Caco-2 (cell line): ENCODE measurements at regions of chr5 and their contacts with region 1.

Region 1: DNA sequence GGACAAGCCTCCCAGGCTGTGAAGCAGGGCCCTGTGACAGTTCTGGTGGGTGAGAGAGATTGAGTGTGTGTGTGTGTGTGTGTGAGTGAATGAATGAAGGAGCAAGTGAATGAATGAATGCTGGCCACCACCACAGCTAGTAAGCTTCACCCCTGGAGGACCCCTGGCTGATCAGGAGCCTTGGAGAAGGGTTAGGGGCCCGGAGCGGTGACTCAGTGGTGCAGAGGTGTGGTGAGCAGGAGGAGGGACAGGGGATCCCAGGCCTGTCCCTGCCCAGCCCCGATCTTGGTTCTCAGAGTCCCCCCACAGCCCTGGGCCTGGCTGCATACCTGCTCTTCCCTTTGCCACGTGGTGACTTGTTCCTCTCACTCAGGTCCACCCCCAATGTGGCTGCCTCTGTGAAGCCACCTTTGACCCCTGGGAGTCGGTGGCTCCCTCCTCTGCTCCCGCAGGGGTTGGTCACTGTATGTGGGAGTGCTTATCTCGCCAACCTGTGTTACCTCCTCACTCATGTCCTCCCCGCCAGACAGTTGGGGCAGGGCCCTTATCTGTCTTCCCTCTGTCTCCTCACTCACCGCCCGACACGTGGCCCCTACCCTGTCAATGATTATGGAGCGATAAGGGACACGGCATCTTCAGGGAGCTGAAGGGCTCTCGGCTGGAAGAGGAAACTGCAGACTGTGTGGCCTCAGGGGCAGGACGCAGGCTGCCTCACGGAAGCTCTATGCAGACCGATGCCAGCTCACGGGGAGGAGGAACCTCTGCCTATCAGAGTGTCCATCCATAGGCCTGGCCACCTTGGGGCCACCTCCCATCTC is 99.9 kb upstream of the PITX1 start:
- DNase-seq: peak; percentile 96 to 99
- H3K4me3 ChIP-seq: no peak overlapping the region
- H3K4me3 Mint-ChIP-seq: peak overlapping the region; percentile 39
- H3K27ac Mint-ChIP-seq: peak overlapping the region; percentile 91
- H3K4me1 ChIP-seq: peaks cover 59% of the 10 kb centered on the region
- H3K4me1 Mint-ChIP-seq: peaks cover 65% of the 10 kb centered on the region
- H3K27me3 ChIP-seq: no peaks in the 10 kb centered on the region
- H3K27me3 Mint-ChIP-seq: no peaks in the 10 kb centered on the region
- CTCF ChIP-seq: no peak

Region 2: DNA sequence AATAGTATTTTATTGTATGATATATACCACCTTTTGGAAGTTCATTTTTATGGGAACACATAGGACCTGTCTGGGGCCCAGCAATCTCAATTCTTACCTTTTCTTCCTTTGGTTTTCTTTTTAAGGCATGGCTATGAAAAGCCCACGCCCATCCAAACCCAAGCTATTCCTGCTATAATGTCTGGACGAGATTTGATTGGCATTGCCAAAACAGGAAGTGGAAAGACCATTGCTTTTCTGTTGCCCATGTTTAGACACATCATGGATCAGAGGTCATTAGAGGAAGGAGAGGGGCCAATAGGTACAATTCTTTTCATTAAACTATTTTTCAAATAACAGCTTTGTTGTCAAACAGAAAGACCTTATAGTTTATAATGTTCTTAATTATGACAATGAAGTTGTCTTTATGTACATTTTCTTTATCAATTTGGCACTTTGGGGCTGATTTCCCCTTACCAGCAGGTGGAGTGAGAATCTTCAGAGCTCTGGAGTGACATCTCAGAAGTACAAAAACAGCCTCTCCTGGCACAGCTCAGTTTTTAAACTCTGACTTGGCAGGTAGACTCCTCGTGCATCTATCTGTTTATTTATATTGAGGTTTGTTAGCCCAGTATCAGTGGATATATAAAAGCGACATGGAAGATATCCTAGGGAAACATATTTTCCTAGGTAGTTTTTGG is 349.5 kb before region 1 on chr5:
- CTCF ChIA-PET with region 1: no interaction called
- POLR2A ChIA-PET with region 1: no interaction called
- intact Hi-C with region 1: no loop called
- DNase-seq: no peak
- H3K4me3 ChIP-seq: no peak overlapping the region
- H3K4me3 Mint-ChIP-seq: no peak overlapping the region
- H3K27ac Mint-ChIP-seq: no peak overlapping the region
- H3K4me1 ChIP-seq: no peaks in the 10 kb centered on the region
- H3K4me1 Mint-ChIP-seq: no peaks in the 10 kb centered on the region
- H3K27me3 ChIP-seq: no peaks in the 10 kb centered on the region
- H3K27me3 Mint-ChIP-seq: no peaks in the 10 kb centered on the region
- CTCF ChIP-seq: peak in 1 of 2 experiments; percentile 21

Region 3: DNA sequence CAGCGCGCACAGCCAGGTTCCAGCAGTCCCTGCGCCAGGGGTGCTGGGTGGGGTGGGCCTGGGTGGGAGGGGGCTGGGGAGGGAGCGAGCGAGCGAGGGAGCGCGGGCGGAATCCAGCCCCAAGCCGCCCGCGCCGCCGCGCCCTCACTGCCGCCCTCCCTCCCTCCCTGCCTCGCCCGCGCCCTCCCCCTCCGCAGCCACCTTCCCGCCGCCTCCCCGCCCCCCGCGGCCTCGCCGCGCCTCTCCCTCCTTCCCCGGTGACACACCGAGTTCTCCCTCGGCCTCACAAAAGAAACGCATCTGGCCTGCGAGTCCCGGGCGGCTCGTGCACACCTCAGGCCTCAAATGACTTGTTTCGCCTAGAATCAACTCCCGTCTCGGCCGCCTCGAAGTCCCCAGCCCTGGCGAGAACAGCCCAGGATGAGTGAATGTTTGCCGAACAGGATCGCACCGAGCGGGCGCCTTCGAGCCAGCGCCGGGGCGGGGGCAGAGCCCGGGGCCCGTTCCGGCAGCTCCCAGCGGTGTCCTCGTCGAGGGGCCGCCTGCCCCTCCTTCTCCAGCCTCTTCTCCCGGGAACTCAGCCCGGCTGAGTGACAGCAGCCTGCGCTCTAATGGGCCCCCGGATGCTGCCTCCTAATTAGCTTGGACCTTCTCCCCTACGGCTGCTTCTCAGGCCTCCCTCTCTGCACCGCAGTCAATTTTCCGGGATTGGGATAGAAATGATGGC is 99.5 kb before region 1 on chr5:
- CTCF ChIA-PET with region 1: no interaction called
- POLR2A ChIA-PET with region 1: interaction called, 7 read pairs
- intact Hi-C with region 1: loop called (anchors 1 kb)
- DNase-seq: peak; percentile 88 to 89
- H3K4me3 ChIP-seq: peak overlapping the region; percentile 83
- H3K4me3 Mint-ChIP-seq: peak overlapping the region; percentile 89
- H3K27ac Mint-ChIP-seq: peak overlapping the region; percentile 81
- H3K4me1 ChIP-seq: peaks cover 27% of the 10 kb centered on the region
- H3K4me1 Mint-ChIP-seq: peaks cover 31% of the 10 kb centered on the region
- H3K27me3 ChIP-seq: no peaks in the 10 kb centered on the region
- H3K27me3 Mint-ChIP-seq: no peaks in the 10 kb centered on the region
- CTCF ChIP-seq: no peak

Region 4: GRCh38 chr5:135094339-135095051 is 39.4 kb before region 1 on chr5:
- CTCF ChIA-PET with region 1: no interaction called
- POLR2A ChIA-PET with region 1: no interaction called
- intact Hi-C with region 1: loop called (anchors 5 kb)
- DNase-seq: no peak
- H3K4me3 ChIP-seq: no peak overlapping the region
- H3K4me3 Mint-ChIP-seq: no peak overlapping the region
- H3K27ac Mint-ChIP-seq: peak overlapping the region; percentile 20
- H3K4me1 ChIP-seq: peaks cover 16% of the 10 kb centered on the region
- H3K4me1 Mint-ChIP-seq: peaks cover 15% of the 10 kb centered on the region
- H3K27me3 ChIP-seq: no peaks in the 10 kb centered on the region
- H3K27me3 Mint-ChIP-seq: no peaks in the 10 kb centered on the region
- CTCF ChIP-seq: no peak

Region 5: DNA sequence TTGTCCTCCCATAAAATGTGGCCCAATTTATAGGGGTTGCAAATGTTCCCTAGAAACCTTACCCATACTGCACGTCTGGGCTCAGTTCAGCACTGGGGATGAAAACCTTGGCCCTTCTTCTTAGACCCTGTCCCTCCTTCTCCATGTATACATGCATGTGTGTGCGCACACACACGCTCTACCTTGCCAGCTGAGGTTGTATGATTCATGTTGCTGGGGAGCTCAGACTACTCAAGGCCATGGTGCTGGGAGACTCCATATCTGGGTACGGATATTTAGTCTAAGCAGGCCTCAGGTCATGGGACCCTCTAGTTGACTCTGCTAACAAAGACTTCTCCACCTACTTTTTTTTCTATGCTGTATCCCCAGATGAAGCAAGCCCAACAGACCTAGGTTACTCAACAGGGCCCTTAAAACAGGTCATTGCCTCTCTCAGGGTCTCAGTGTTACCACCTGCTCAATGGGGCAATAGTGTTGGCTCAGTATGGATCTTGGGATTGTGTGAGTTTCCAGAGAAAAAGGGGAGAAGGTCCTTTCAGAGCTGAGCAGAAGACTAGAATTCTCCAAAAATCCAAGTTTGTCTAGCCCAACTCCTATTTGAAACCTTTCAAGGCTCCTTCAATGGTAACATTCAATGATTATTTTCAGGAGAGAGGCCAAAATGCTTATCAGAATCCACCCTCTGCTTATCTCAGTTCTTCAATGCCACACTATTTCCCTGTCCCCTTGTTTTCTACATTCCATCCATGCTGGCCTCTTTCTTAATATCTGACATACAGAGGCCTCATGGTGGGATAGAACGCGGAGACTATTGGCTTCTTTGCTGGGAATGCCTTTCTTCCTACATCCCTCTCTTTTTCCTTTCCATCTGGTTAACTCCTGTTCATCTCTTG is 23.8 kb after region 1 on chr5:
- CTCF ChIA-PET with region 1: no interaction called
- POLR2A ChIA-PET with region 1: no interaction called
- intact Hi-C with region 1: loop called (anchors 1 kb)
- DNase-seq: no peak
- H3K4me3 ChIP-seq: no peak overlapping the region
- H3K4me3 Mint-ChIP-seq: peak overlapping the region; percentile 30
- H3K27ac Mint-ChIP-seq: peak overlapping the region; percentile 84
- H3K4me1 ChIP-seq: peaks cover 50% of the 10 kb centered on the region
- H3K4me1 Mint-ChIP-seq: peaks cover 50% of the 10 kb centered on the region
- H3K27me3 ChIP-seq: no peaks in the 10 kb centered on the region
- H3K27me3 Mint-ChIP-seq: no peaks in the 10 kb centered on the region
- CTCF ChIP-seq: no peak

Region 6: DNA sequence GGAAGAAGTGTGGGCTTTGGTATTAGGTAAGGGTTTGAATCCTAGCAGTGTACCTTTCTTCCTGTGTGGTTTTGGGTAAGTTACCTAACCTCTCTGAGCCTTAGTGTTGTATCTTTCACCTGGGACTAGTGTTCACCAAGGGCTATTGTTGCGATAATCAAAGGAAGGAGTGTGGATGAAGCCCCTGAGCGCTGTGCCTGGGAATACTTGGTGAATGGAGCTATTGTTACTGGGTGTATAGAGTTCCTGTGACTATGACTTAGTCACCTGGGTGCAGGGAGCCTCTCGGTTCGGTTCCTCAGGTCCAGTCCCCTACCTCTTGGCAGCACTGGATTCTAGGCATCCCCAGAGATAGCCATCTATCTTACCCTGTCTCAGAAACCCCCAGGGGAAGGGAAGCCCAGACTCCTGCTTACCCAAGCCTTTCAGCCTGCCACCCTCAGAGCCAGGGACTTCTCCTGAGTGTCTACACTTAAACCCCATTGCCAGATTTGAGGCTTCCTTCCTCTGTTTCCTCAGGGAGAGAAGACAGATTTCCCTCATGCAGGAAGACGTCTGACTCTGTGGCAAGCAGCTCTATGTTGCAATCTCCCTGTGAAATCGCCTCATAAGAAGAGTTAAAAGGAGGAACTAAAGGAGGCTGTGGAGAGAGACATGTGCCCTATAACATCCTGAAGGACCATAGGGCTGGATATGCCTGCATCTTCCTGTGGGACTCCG is 81.2 kb after region 1 on chr5:
- CTCF ChIA-PET with region 1: no interaction called
- POLR2A ChIA-PET with region 1: no interaction called
- intact Hi-C with region 1: no loop called
- DNase-seq: peak in 1 of 2 experiments; percentile 14
- H3K4me3 ChIP-seq: no peak overlapping the region
- H3K4me3 Mint-ChIP-seq: no peak overlapping the region
- H3K27ac Mint-ChIP-seq: no peak overlapping the region
- H3K4me1 ChIP-seq: no peaks in the 10 kb centered on the region
- H3K4me1 Mint-ChIP-seq: peaks cover 6% of the 10 kb centered on the region
- H3K27me3 ChIP-seq: no peaks in the 10 kb centered on the region
- H3K27me3 Mint-ChIP-seq: no peaks in the 10 kb centered on the region
- CTCF ChIP-seq: no peak